CD8-positive, alpha-beta T cell (primary cell): ENCODE measurements at regions of chr9 and their contacts with region 1.

Region 1: DNA sequence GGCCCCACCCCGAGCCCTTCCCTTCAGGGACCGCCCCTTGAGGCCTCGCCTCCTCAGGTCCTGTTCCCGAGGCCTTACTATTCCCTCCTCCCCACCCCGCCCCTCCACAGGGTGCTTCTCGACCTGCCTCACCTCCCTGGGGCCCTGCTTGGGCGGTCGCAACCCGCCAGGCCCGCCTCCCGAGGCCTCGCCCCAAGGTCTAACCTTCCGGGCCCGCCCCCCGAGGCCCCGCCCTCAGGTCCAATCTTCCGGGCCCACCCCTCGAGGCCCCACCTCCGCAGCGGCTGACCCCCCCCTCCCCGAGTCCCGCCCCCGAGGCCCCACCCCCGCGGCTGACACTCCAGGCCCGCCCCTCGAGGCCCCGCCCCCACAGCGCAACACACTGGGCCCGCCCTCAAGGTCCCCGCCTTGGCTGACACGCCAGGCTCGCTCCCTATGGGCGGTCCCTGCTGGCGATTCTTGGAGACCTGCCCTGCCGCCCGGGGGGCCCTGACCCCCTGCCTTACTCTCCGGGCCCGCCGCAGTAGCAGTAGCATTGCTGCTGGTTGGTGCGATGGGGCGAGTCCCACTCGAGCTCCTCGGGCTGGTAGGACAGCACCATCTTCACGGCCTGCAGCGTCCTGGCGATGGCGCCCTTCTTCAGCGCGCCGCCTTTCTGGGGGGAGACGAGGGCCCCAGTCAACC is 8.2 kb downstream of the PHF19 start:
- DNase-seq: peak; percentile 95 to 98 (median 97)
- ATAC-seq: peak; percentile 84
- H3K4me3 ChIP-seq: peak overlapping the region; percentile 57 to 71
- H3K4me3 Mint-ChIP-seq: peak overlapping the region; percentile 91
- H3K27ac ChIP-seq: peak overlapping the region; percentile 62 to 82
- H3K27ac Mint-ChIP-seq: peak overlapping the region; percentile 98
- H3K4me1 ChIP-seq: peaks cover 22% of the 10 kb centered on the region
- H3K4me1 Mint-ChIP-seq: peaks cover 21% of the 10 kb centered on the region
- H3K27me3 ChIP-seq: no peaks in the 10 kb centered on the region
- H3K27me3 Mint-ChIP-seq: no peaks in the 10 kb centered on the region
- CTCF ChIP-seq: peak; percentile 65

Region 2: DNA sequence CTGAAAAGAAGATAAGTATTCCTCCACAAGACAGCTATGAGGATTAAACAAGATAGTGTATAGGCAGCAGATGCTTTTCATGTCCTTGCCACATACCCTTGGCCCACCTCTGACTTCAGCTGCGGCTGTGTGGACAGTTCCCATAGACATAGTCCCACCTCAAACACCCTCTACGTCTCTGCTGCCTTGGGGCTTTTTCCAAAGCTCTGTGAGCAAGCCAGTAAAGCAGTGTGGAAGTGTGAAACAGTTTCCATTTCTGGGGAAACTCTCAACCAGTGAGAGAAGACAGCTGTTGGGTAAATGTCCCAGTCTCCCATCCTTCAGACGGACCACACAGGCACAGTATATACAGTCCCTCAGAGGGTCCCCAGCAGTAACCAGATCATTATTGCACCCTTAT is 414.4 kb before region 1 on chr9:
- CTCF ChIA-PET with region 1: no interaction called
- POLR2A ChIA-PET with region 1: no interaction called
- intact Hi-C with region 1: no loop called
- DNase-seq: no peak
- ATAC-seq: no peak
- H3K4me3 ChIP-seq: no peak overlapping the region
- H3K4me3 Mint-ChIP-seq: no peak overlapping the region
- H3K27ac ChIP-seq: no peak overlapping the region
- H3K27ac Mint-ChIP-seq: no peak overlapping the region
- H3K4me1 ChIP-seq: no peaks in the 10 kb centered on the region
- H3K4me1 Mint-ChIP-seq: no peaks in the 10 kb centered on the region
- H3K27me3 ChIP-seq: no peaks in the 10 kb centered on the region
- H3K27me3 Mint-ChIP-seq: no peaks in the 10 kb centered on the region
- CTCF ChIP-seq: no peak

Region 3: DNA sequence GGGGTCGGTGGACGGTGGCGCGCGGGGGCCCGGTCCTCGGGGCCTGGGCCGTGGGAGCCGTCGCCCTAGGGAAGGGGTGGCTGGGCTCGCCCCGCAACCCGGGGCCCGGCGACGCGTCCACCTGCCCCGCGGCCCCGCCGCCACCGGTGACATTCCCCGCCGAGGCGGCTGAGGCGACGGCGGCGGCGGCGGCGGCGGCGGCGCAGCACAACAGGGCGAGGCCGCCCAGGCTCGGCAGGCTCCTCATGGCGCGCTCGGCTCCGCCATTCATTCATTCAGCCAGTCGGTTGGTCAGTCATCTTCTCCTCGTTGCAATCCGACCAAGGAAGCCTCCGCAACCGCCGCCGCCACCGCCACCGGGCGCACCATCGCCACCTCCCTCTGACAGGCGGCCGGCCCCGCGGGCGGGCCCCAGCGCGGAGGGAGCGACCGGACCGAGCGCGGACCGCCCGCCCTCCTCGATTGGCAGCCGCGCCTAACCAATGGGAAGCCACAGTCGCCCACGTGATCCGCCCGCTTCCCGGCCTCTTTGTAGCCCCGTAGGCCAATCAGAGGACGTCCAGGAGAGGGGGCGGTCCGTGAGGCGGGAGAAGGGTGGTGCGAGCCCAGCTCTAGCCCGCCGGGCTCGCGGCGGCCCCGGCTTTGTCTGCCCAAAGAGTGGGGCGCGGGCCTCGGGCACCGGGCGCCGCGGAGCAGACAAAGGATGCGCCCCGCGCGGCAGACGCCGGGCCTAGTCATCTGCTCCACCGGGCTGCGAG is 154.6 kb before region 1 on chr9 and contains the start of gene MEGF9:
- CTCF ChIA-PET with region 1: no interaction called
- POLR2A ChIA-PET with region 1: no interaction called
- intact Hi-C with region 1: loop called in 1 of 2 experiments (anchors 2 kb)
- DNase-seq: peak; percentile 89 to 98 (median 96)
- ATAC-seq: peak; percentile 94
- H3K4me3 ChIP-seq: peak within 1 kb of the TSS; percentile 69 to 92
- H3K4me3 Mint-ChIP-seq: peak within 1 kb of the TSS; percentile 83
- H3K27ac ChIP-seq: peak within 1 kb of the TSS; percentile 61 to 64
- H3K27ac Mint-ChIP-seq: peak within 1 kb of the TSS; percentile 86
- H3K4me1 ChIP-seq: peaks cover 38% of the 10 kb centered on the region
- H3K4me1 Mint-ChIP-seq: peaks cover 35% of the 10 kb centered on the region
- H3K27me3 ChIP-seq: no peaks in the 10 kb centered on the region
- H3K27me3 Mint-ChIP-seq: no peaks in the 10 kb centered on the region
- CTCF ChIP-seq: no peak
- total RNA-seq, gene MEGF9: 3.0 to 3.1 TPM

Region 4: DNA sequence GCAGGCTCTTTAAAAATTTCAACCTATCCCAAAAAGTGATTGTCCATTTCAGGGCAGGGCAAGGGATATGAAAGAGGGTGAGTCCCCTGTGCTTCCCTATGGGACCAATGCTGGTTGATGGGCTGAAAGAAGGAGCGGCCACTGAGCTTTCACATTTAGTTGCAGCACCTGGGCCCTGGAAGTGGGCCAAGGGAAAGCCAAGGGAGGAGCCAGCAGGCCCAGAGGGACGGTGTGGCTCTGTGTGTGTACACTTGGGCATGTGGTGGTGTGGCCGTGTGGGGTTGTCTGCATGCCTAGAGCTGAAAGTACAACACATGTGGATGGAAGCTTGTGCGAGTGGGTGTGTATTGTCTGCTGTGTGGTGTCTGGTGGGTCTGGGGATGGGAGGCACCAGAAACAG is 12.1 kb before region 1 on chr9:
- CTCF ChIA-PET with region 1: interaction called, 10 read pairs
- POLR2A ChIA-PET with region 1: interaction called, 9 read pairs
- intact Hi-C with region 1: no loop called
- DNase-seq: no peak
- ATAC-seq: no peak
- H3K4me3 ChIP-seq: no peak overlapping the region
- H3K4me3 Mint-ChIP-seq: no peak overlapping the region
- H3K27ac ChIP-seq: no peak overlapping the region
- H3K27ac Mint-ChIP-seq: peak overlapping the region; percentile 72
- H3K4me1 ChIP-seq: no peaks in the 10 kb centered on the region
- H3K4me1 Mint-ChIP-seq: peaks cover 22% of the 10 kb centered on the region
- H3K27me3 ChIP-seq: no peaks in the 10 kb centered on the region
- H3K27me3 Mint-ChIP-seq: no peaks in the 10 kb centered on the region
- CTCF ChIP-seq: no peak

Region 5: GRCh38 chr9:120909904-120910303 is 41.1 kb after region 1 on chr9:
- CTCF ChIA-PET with region 1: interaction called, 15 read pairs
- POLR2A ChIA-PET with region 1: interaction called, 3 read pairs
- intact Hi-C with region 1: no loop called
- DNase-seq: peak in 5 of 9 experiments; percentile 67 to 80 (median 74)
- ATAC-seq: peak; percentile 69
- H3K4me3 ChIP-seq: no peak overlapping the region
- H3K4me3 Mint-ChIP-seq: no peak overlapping the region
- H3K27ac ChIP-seq: peak overlapping the region; percentile 1 to 76
- H3K27ac Mint-ChIP-seq: peak overlapping the region; percentile 86
- H3K4me1 ChIP-seq: peaks cover 61% of the 10 kb centered on the region
- H3K4me1 Mint-ChIP-seq: peaks cover 77% of the 10 kb centered on the region
- H3K27me3 ChIP-seq: no peaks in the 10 kb centered on the region
- H3K27me3 Mint-ChIP-seq: no peaks in the 10 kb centered on the region
- CTCF ChIP-seq: no peak

Region 6: DNA sequence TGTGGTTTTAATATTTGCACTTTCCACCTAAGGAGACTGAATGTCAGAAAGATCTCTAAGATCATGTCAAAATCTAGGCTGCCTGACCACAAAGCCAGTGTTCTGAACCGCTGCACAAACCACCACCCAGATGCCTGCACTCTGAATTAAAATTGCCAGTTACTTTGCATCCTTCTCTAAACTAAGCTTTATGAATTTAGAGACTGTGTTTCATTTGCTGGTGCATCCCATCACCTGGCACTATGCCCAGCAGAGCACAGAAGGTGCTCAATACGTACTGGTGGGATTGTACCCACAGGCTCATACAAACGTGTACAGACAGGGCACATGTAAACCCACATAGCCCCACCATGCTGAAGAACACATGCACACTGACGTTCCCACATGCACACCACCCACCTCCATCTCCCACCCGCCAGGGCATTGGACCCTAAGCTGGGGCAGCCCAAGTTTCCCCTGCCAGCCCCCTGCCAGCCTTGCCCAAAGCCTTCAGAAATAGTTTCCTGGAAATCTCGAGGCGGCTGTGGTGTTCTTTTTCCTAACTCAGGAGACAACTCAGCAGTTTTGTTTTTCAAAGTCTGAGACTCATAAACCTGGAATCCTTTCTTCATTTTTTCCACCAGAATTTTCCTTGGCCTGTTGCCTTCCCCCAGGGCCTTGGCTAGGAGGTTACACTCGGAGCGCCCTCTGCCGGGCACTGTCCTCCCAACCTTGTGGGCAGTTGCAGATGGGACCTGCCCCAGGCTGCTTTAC is 67.4 kb after region 1 on chr9:
- CTCF ChIA-PET with region 1: interaction called, 351 read pairs
- POLR2A ChIA-PET with region 1: interaction called, 18 read pairs
- intact Hi-C with region 1: loop called (anchors 1 kb)
- DNase-seq: peak; percentile 69 to 94 (median 88)
- ATAC-seq: peak; percentile 65
- H3K4me3 ChIP-seq: no peak overlapping the region
- H3K4me3 Mint-ChIP-seq: peak overlapping the region; percentile 30
- H3K27ac ChIP-seq: peak overlapping the region; percentile 52 to 95
- H3K27ac Mint-ChIP-seq: peak overlapping the region; percentile 90
- H3K4me1 ChIP-seq: peaks cover 61% of the 10 kb centered on the region
- H3K4me1 Mint-ChIP-seq: peaks cover 60% of the 10 kb centered on the region
- H3K27me3 ChIP-seq: no peaks in the 10 kb centered on the region
- H3K27me3 Mint-ChIP-seq: no peaks in the 10 kb centered on the region
- CTCF ChIP-seq: peak; percentile 84

Region 7: DNA sequence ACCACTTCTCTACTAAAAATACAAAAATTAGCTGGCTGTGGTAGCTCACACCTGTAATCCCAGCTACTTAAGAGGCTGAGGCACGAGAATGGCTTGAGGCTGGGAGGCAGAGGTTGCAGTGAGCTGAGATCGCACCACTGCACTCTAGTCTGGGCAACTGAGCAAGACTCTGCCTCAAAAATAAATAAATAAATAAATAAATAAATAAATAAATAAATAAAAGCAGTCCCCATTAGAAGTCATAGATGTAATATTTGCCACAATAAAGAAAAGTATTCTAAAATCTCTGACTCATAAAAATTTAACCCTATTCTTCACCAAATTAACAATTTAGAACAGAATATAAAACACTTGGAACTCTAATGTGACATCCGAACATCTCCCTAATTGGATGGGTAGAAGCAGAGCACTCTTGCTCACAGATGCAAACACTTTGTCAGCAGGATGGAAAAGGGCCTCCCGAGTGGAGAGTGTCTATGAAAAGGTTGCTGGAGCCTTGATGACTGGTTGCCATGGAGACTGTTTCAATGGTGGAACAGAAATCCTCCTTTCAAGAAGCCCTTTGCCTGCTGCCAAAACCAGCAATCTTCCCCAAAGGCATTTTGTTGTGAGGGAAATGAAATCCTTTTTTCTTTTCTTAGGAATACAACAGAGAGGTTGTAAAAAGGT is 96.7 kb after region 1 on chr9:
- CTCF ChIA-PET with region 1: no interaction called
- POLR2A ChIA-PET with region 1: no interaction called
- intact Hi-C with region 1: no loop called
- DNase-seq: no peak
- ATAC-seq: no peak
- H3K4me3 ChIP-seq: no peak overlapping the region
- H3K4me3 Mint-ChIP-seq: no peak overlapping the region
- H3K27ac ChIP-seq: no peak overlapping the region
- H3K27ac Mint-ChIP-seq: no peak overlapping the region
- H3K4me1 ChIP-seq: no peaks in the 10 kb centered on the region
- H3K4me1 Mint-ChIP-seq: no peaks in the 10 kb centered on the region
- H3K27me3 ChIP-seq: no peaks in the 10 kb centered on the region
- H3K27me3 Mint-ChIP-seq: peaks cover 3% of the 10 kb centered on the region
- CTCF ChIP-seq: no peak

Region 8: DNA sequence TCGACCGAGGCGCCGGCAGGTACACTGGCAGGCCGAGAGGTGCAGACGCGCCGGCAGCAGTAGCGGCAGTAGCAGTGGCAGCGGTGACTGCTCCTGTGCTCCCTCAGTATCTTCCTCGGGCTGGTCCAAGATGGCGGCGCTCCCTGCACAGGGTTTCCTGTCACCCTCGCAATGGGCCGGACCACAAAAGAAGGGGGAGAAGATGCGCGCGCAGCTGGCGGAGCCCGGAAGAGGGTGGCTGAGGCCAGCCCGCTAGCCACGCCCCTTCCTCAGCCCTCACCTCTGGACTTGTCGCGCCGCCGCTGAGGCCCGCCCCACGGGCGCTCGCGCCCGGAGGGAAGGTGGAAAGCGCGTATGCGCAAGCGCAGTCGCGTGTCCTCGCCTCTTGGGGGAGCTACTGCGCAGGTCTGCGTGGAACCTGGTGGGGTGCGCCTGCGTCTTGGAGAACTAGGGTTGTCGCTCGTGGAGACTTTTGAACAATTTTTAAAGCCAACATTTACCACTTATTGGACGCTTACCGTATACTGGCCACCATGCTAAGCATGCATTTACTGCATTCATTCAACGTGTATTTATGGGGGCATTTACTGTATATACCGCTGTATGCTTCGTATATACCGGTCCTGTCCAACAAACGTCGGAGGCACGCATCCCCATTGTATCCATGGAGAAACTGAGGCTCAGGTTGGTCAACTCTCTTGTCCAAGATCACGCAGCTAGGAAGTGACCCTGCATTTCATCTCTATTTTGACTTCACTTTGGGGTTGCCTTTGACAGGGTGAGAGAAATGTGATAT is 333.1 kb after region 1 on chr9 and contains the start of gene RAB14:
- CTCF ChIA-PET with region 1: no interaction called
- POLR2A ChIA-PET with region 1: no interaction called
- intact Hi-C with region 1: loop called in 1 of 2 experiments (anchors 1 kb)
- DNase-seq: peak; percentile 100
- ATAC-seq: peak; percentile 90
- H3K4me3 ChIP-seq: peak within 1 kb of the TSS; percentile 77 to 79
- H3K4me3 Mint-ChIP-seq: peak within 1 kb of the TSS; percentile 96
- H3K27ac ChIP-seq: peak within 1 kb of the TSS; percentile 79 to 82
- H3K27ac Mint-ChIP-seq: peak within 1 kb of the TSS; percentile 97
- H3K4me1 ChIP-seq: peaks cover 41% of the 10 kb centered on the region
- H3K4me1 Mint-ChIP-seq: peaks cover 53% of the 10 kb centered on the region
- H3K27me3 ChIP-seq: no peaks in the 10 kb centered on the region
- H3K27me3 Mint-ChIP-seq: no peaks in the 10 kb centered on the region
- CTCF ChIP-seq: no peak
- total RNA-seq, gene RAB14: 58.8 to 60.4 TPM